Esophagus muscularis mucosa (tissue), 4 donors: ENCODE measurements at regions of chr3 and their contacts with region 1.

Region 1: GRCh38 chr3:127831723-127832172 is 9.4 kb upstream of the MGLL start:
- DNase-seq: no peak
- H3K4me3 ChIP-seq: no peak overlapping the region
- H3K27ac ChIP-seq: no peak overlapping the region
- H3K4me1 ChIP-seq: no peaks in the 10 kb centered on the region
- H3K27me3 ChIP-seq: no peaks in the 10 kb centered on the region
- CTCF ChIP-seq: peak; percentile 69 to 81 (median 69)
- EP300 ChIP-seq: no peak
- POLR2A ChIP-seq: no peak

Region 2: DNA sequence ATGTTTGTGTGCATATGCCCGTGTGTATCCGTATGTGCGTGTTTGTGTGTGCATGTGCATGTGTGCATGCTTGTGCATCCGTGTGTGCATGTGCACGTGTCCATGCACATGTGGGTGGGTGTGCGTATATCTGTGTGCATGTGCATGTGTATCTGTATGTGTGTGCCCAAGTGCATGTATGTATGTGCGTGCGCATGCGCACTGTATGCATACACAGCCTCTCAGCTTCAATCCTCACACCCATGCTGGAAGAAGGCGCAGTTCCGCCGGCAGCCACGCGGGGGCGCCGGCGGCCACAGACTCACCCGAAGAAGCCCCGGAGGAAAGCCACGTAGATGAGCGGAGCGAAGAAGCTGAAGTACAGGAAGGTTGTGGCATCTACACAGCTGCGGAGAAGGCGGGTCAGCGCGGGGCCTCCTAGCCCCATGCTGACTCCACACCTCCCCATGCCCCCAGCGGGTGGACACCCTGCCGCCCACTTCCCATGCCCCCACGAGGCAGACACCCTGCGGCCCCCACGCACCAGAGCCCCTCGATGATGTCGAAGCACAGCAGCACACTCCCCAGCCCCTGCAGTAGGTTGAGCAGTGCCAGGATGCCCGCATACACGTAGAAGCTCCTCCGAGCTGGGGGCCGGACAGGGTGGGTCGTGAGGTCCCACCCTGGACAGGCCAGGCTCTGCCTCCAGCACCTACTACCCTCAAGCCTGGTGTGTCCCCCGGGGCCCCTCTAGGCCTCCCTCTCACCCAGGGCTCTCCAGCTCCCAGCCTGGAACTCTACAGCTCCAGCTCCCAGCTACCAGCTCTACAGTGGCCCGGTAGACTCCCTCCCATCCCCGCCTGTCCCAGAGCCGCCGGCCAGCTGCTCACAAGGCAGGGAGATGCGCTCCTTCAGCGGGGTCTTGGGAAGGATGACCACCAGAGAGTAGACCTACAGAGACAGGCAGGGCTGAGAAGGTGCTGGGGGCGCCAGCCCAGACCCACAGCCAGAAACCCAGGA is 256.6 kb before region 1 on chr3:
- intact Hi-C with region 1: loop called (anchors 10 kb)
- DNase-seq: peak; percentile 97
- H3K4me3 ChIP-seq: no peak overlapping the region
- H3K27ac ChIP-seq: peak overlapping the region in 1 of 4 donors; percentile 43
- H3K4me1 ChIP-seq: peaks cover 6 to 40% (median 14%) of the 10 kb centered on the region in 4 donors
- H3K27me3 ChIP-seq: no peaks in the 10 kb centered on the region
- CTCF ChIP-seq: peak in 2 of 3 experiments; percentile 97 to 98
- EP300 ChIP-seq: no peak
- POLR2A ChIP-seq: no peak

Region 3: DNA sequence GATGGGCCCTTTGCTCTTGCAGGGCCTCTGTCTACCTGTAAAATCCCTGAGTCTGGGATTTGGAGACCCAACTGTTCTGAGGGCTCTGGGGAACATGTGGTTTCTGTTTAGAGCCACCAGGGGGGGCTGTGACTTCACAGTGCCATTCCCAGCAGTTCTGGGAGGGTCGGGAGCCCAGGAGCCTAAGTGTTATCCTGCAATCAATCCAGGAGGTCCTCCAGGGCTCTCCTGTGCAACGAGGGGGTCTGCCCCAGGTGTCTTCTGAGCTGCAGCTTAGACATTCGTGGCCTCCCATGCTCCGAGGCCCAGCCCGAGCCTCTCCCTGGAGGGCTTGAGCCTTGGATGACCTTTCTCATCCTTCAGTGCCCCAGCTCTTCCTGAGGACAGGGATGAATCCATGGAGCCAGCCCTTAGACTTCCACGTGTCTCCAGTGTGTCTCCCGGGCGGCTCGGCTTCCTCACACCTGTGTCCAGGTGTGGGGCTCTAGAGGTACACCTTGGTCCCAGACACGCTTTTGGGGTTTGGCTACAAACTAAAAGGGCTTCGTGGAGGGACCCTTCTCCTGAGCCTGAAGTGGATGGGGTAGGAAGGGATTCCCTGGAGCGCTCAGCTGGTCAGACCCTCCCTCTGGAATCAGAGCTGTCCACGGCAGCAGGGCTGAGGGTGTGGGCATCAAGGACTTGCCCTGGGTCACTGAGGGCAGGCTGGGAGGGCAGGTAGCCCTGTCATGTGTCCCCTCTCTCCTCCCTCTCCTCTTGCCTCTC is 179.3 kb before region 1 on chr3:
- intact Hi-C with region 1: loop called (anchors 2 kb)
- DNase-seq: no peak
- H3K4me3 ChIP-seq: no peak overlapping the region
- H3K27ac ChIP-seq: no peak overlapping the region
- H3K4me1 ChIP-seq: peaks cover 4 to 14% (median 12%) of the 10 kb centered on the region in 4 donors
- H3K27me3 ChIP-seq: no peaks in the 10 kb centered on the region
- CTCF ChIP-seq: peak; percentile 84 to 90 (median 85)
- EP300 ChIP-seq: no peak
- POLR2A ChIP-seq: no peak

Region 4: DNA sequence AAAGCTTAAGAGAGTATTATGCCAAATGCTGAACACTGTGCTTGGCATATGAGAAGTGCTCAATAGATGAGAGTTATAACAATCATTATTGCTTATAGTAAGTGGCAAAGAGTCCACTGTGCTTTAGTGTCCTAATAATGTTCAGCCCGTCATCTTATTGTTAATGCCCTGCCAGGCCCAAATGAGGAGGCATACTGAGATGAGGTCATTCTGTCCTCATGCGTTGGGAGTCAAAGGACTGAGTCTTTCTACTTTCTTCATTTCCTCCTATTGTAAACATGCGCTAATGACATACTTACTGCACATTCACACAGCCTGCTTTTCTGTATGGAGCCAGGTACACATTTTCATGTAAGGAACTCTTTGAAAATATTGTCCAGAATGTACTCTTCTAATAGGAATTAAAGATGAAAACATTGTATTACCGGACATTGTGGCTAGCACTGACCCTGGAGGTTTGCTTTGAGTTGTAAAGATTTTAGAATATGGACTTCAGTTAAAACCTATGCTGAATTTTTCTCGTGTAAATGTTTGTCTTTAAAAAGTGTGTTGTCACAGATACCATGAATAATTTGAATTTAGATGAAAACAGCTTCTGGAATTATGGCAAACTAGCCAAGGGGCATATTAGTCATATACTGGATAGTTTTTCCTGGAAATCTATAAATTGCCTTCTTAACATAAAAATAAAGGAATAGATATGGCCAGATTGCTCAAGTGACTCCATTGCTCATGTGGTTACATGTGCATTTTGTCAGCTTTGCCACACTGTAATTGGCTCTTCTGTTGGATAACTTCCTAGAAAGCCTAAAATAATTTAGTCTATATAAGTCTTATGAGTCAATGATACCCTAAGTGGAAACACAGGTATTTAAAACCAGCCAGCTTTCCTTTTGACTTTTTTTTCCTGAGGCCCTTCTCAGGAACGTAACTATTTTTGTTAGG is 121.6 kb after region 1 on chr3:
- intact Hi-C with region 1: no loop called
- DNase-seq: no peak
- H3K4me3 ChIP-seq: no peak overlapping the region
- H3K27ac ChIP-seq: no peak overlapping the region
- H3K4me1 ChIP-seq: peaks cover 0 to 18% (median 1%) of the 10 kb centered on the region in 4 donors
- H3K27me3 ChIP-seq: no peaks in the 10 kb centered on the region
- CTCF ChIP-seq: no peak
- EP300 ChIP-seq: no peak
- POLR2A ChIP-seq: no peak